ENCODE measurements at regions of chr10 and their contacts with region 1.

Region 1: GRCh38 chr10:28663576-28664313 is 13.6 kb upstream of the BAMBI start:
- DNase-seq: peak; percentile 89 to 96 (median 90)
- H3K4me3 ChIP-seq: no peak overlapping the region
- H3K27ac ChIP-seq: no peak overlapping the region
- H3K4me1 ChIP-seq: peaks cover 0 to 2% (median 0%) of the 10 kb centered on the region in 3 donors
- H3K27me3 ChIP-seq: no peaks in the 10 kb centered on the region
- CTCF ChIP-seq: peak; percentile 98

Region 2: DNA sequence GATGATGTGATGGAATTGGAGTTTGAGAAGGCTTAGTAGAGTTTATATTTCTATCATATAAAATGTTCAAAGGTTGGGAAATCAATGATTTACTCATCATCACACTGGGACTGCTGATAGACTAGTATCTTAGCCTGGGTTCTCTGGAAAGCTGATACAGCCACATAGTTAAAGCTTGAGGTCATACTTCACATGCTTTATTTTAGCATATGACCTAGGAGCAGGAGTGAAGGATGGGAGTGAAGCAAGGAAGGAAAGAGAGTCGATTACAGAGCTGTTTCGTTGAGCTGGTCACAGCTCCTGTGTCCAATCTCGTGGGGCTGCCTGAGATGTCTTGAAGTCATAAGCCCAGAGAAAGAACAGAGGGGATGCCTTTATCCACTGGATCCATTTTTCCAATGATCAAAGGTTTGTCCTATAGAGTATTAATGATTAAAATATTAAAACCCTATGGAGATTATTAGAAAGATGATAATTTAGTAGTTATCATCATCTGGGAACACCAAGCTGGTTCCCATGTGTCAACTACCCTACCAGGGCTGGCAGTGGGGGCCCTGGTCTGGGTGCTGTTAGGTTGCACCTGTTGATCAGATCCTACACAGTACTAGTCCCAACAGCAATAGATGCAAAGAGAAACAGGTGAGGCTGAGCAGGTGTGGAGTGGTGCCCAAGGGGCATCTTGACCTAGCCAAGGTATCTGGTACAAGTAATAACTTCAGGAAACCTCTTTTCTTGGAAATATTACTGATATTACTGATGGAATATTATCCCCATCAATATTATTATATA is 91.4 kb after region 1 on chr10:
- intact Hi-C with region 1: no loop called
- DNase-seq: no peak
- H3K4me3 ChIP-seq: no peak overlapping the region
- H3K27ac ChIP-seq: no peak overlapping the region
- H3K4me1 ChIP-seq: no peaks in the 10 kb centered on the region
- H3K27me3 ChIP-seq: no peaks in the 10 kb centered on the region
- CTCF ChIP-seq: no peak

Region 3: DNA sequence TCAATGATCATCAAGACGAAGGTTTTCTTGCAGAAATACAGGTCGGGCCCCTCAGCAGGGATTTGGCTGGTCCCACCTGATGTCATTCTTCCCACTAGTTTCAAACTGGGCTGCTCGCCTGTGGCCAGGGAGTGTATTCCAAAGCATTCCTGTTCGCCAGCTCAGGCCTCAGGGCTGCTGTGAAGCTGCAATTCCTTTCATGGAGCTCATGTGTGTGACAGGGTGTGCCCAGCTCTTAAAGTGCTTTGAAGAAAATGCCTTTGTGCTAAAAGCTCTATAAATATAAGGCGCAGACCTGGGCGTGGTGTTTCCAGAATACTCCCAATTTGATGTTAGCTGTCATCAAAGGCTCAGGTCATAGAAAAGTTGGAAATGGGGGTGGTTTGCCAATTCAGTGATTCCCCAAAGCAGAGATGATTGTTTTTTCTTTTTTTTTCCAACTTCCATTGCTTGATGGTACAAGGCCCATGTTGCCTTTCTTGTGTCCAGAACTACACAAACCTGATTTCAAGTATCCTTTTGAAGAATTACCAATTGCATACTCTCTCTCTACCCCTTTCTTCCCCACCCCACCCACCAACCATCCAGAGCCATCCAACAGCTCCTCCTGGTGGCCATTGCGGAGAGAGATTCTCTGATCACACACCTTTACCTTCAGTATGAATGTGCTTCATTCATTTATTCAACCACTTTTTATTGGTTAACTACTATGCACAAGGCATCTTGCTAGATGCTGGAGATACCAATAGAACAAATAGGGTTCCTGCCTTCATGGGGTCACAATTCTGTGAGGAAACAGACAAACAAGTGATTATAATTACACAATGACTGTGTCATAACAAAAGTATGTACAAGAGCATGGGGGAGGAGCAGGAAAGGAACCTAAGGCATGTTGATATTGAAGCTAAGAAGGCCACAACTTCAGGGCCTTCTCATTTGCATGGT is 327.9 kb after region 1 on chr10:
- intact Hi-C with region 1: loop called (anchors 10 kb)
- DNase-seq: peak in 4 of 5 donors; percentile 53 to 69 (median 57)
- H3K4me3 ChIP-seq: no peak overlapping the region
- H3K27ac ChIP-seq: no peak overlapping the region
- H3K4me1 ChIP-seq: no peaks in the 10 kb centered on the region
- H3K27me3 ChIP-seq: no peaks in the 10 kb centered on the region
- CTCF ChIP-seq: peak; percentile 70

Region 4: GRCh38 chr10:29131952-29132820 is 468.4 kb after region 1 on chr10:
- intact Hi-C with region 1: loop called (anchors 10 kb)
- DNase-seq: no peak
- H3K4me3 ChIP-seq: no peak overlapping the region
- H3K27ac ChIP-seq: no peak overlapping the region
- H3K4me1 ChIP-seq: peaks cover 0 to 2% (median 0%) of the 10 kb centered on the region in 3 donors
- H3K27me3 ChIP-seq: no peaks in the 10 kb centered on the region
- CTCF ChIP-seq: no peak

Region 5: DNA sequence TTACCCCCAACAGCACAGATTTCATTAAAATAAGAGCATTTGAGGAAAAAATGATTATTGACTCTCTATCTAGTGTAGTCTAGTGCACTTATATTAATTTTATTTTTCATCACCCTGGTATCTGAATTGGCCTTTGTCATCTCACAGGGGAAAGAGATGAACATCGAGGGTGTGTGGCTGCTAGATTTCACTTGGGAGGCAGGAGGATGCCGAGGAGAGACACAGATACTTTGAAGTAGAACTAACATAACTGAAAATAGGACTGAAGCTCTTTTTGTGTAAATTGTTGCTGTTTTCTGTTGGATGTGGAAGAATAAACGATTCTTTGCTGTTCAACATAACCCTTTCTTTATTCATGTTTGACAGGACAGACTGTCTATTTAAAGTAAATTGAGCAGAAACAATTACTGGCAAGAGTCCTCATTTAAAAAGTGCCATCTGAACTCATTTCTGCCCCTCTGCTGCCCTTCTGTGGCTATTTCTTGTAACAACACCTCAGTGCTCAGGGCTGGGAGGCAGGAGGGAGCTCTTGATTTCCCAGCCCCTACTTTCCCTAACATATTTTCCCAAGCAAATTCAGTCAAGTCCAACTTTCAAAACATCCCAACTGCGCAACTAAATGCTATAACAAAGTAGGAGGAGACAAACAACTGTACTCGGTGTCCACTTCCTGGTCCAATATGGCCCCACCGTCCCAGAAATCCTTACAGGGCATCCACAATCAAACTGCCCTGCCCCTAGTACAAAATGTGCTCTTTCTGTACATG is 640.7 kb after region 1 on chr10:
- intact Hi-C with region 1: loop called (anchors 10 kb)
- DNase-seq: peak in 4 of 5 donors; percentile 74 to 92 (median 80)
- H3K4me3 ChIP-seq: no peak overlapping the region
- H3K27ac ChIP-seq: no peak overlapping the region
- H3K4me1 ChIP-seq: peaks cover 3 to 6% (median 5%) of the 10 kb centered on the region in 3 donors
- H3K27me3 ChIP-seq: no peaks in the 10 kb centered on the region
- CTCF ChIP-seq: peak; percentile 86